Prostate gland (tissue), 2 donors: ENCODE measurements at regions of chr2 and their contacts with region 1.

Region 1: DNA sequence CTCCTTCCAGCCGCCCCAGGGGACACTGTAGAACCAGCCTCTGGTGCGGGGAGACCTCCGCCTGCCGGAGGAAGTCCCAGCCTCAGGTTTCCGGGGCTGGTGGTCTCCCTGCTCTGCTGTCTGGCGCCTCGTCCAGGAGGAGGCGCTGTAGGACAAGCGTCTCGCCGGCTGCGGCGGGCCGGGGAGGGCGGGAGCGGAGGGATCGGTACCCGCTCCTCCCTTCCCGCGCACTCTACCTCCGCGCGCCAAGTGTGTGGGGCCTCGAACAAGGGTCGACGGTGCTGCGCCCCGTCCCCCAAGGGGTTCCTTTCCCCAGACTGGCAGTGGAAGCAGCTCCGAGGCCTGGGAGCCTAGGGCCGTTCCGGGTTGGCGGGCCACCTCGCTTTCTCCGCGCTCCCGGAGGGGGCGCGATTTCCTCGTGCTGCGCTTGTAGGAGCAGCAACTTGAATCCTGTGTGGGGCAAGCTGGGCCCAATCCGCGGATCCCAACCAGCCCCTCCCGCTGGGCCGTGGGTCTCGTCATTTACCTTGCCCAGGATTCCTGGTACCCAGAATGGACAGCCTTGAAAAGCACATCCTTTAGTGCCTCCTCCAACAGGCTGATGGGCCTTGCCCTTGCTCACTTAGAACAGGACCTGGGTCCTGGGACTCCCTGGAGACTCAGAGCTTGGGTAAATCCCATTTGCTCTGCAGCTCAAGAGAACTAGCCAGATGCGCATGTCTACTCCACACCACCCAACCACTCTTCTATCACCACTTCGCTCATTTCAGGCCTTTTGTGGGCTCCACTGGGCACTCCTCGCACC is 10.6 kb upstream of the HOXD4 start:
- DNase-seq: peak; percentile 47
- H3K4me3 ChIP-seq: peak overlapping the region; percentile 27 to 35
- H3K27ac ChIP-seq: no peak overlapping the region
- H3K4me1 ChIP-seq: no peaks in the 10 kb centered on the region
- H3K27me3 ChIP-seq: no peaks in the 10 kb centered on the region
- CTCF ChIP-seq: peak; percentile 86 to 91 (median 89)
- POLR2A ChIP-seq: no peak

Region 2: DNA sequence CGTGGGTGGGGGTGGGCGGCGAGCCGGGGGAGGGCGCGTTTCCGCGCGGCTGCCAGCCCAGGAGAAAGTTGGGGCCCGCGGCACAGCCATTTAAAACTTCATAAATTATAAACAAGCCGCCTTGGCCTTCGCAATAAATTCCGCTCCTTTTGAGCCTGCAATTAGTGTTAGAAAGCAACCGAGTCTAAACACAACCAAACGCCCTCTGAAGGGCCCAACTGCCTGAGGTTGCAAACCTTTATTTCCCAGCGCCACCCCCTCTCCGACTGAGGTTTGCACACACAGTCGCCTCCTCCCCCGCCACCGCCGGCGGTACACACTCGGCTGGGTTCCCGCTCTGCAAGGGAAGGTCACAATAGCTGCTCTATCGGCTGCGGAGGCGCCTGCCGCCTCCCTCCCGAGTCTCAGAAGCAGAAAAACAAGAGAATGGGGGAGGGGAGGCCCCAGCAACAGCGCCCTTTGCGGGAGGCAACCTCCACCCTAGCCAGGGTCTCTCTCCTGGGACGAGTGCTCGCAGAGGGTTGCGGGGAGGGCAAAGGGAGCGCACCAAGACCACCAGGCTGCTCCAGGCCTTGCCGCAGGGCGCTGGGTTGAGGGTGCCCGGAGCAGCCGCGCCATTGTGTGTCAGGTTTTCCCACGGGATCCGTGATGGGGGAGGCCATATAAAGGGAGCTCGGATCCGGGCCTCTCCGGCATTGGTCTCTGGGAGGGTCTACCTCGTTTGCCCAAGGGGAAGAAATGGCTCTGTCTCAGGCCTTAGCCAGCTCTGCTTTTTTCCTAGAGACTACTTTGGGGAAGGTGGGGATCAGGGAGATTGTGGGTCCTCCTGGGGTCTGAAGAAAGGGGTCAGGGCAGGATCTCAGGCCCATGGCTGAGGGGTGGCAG is 34.4 kb after region 1 on chr2:
- intact Hi-C with region 1: no loop called
- DNase-seq: no peak
- H3K4me3 ChIP-seq: no peak overlapping the region
- H3K27ac ChIP-seq: no peak overlapping the region
- H3K4me1 ChIP-seq: no peaks in the 10 kb centered on the region
- H3K27me3 ChIP-seq: peaks cover 42% of the 10 kb centered on the region
- CTCF ChIP-seq: no peak
- POLR2A ChIP-seq: no peak

Region 3: GRCh38 chr2:176356251-176356650 is 215.5 kb after region 1 on chr2:
- intact Hi-C with region 1: no loop called
- DNase-seq: no peak
- H3K4me3 ChIP-seq: no peak overlapping the region
- H3K27ac ChIP-seq: no peak overlapping the region
- H3K4me1 ChIP-seq: no peaks in the 10 kb centered on the region
- H3K27me3 ChIP-seq: no peaks in the 10 kb centered on the region
- CTCF ChIP-seq: no peak
- POLR2A ChIP-seq: no peak

Region 4: GRCh38 chr2:176454893-176455811 is 314.4 kb after region 1 on chr2:
- intact Hi-C with region 1: loop called (anchors 1 kb)
- DNase-seq: peak; percentile 77
- H3K4me3 ChIP-seq: no peak overlapping the region
- H3K27ac ChIP-seq: no peak overlapping the region
- H3K4me1 ChIP-seq: no peaks in the 10 kb centered on the region
- H3K27me3 ChIP-seq: no peaks in the 10 kb centered on the region
- CTCF ChIP-seq: peak; percentile 80 to 97 (median 90)
- POLR2A ChIP-seq: no peak

Region 5: DNA sequence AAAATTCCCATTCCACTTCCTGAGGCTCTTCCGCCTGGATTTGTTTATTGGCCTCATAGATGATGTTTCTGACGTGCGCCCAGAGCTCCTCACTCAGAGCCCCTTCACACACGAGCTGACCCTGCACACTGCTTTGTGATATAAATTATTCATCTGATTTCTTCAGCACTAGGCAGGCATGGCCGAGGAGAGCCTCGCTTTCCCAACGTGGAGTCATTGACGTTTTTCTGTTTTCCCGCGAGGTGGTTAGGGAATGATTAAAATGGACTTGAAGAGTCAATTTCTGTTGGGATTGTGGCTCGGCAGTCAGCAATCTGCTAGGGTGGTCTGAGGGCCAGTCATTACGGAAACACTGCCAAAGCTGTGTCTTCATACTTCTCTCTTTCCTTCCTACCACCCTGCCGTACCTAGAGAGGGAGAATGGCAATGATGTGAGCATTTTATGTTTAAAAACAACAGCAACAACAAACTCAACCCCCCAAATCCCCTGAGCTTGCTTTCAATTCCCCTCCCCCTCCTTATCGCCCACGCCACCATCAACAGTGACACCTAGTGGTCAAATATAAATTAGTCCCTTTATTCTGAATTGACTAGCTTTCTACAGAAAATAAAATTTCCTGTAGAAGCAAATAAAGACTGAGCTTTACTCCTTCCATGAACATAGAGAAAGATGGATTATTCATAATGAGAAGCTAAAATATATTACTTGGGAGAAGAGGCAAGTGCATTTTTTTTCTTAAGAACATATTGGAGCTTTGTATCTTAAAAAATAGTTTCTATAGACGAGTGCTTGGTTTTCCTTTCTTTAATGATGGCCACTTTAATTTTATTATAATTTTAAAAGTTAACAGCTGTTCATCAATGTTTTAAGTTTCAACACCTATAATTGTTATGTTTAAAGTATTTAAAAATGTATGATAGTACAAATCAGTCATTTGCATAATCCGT is 413.7 kb after region 1 on chr2:
- intact Hi-C with region 1: loop called (anchors 2 kb)
- DNase-seq: no peak
- H3K4me3 ChIP-seq: peak overlapping the region; percentile 22 to 24
- H3K27ac ChIP-seq: peak overlapping the region in 1 of 2 donors; percentile 19
- H3K4me1 ChIP-seq: no peaks in the 10 kb centered on the region
- H3K27me3 ChIP-seq: no peaks in the 10 kb centered on the region
- CTCF ChIP-seq: peak; percentile 55 to 88 (median 71)
- POLR2A ChIP-seq: no peak

Region 6: DNA sequence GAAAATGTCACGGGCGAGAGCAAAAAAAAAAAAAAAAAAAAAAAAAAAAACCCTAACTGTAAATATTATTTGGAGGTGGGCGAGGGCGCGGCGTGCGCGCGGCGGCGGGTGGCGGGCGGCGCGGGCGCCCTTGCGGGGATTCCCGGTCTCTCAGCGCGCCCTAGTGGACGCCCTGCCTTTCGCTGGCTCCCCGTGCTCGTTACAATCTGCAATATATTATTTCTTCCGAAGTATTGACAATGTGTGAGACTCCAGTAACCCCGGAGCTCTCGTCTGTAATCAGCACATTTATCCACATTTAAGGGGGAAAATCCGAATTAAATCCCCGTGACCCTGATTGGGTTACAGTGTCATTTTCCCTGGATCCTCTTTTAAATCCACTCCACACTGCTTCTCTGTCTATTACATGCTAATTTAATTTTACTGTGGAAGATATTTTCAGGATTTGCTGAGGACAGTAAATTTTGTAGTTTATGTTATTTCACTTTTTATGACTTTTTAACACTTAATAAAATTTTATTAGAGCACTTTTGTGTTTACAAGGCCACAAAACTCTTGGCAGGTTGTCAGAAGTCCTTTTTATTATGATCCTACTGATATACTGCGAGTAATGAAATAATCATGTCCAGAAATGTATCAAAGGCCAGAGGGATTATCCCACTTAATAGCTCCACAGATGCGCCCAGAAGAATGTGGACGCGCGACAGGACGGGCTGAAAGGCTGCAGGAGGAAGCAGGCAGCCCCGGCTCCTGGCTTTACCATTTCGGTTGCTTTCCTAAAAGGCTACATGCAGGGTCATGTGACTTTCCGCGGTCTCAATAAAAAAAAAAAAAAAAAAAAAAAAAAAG is 497.7 kb after region 1 on chr2:
- intact Hi-C with region 1: loop called (anchors 5 kb)
- DNase-seq: peak; percentile 61
- H3K4me3 ChIP-seq: peak overlapping the region; percentile 25 to 41
- H3K27ac ChIP-seq: no peak overlapping the region
- H3K4me1 ChIP-seq: peaks cover 6% of the 10 kb centered on the region
- H3K27me3 ChIP-seq: peaks cover 21% of the 10 kb centered on the region
- CTCF ChIP-seq: peak; percentile 41 to 85 (median 65)
- POLR2A ChIP-seq: no peak